ENCODE measurements at regions of chr1 and their contacts with region 1.

Region 1: DNA sequence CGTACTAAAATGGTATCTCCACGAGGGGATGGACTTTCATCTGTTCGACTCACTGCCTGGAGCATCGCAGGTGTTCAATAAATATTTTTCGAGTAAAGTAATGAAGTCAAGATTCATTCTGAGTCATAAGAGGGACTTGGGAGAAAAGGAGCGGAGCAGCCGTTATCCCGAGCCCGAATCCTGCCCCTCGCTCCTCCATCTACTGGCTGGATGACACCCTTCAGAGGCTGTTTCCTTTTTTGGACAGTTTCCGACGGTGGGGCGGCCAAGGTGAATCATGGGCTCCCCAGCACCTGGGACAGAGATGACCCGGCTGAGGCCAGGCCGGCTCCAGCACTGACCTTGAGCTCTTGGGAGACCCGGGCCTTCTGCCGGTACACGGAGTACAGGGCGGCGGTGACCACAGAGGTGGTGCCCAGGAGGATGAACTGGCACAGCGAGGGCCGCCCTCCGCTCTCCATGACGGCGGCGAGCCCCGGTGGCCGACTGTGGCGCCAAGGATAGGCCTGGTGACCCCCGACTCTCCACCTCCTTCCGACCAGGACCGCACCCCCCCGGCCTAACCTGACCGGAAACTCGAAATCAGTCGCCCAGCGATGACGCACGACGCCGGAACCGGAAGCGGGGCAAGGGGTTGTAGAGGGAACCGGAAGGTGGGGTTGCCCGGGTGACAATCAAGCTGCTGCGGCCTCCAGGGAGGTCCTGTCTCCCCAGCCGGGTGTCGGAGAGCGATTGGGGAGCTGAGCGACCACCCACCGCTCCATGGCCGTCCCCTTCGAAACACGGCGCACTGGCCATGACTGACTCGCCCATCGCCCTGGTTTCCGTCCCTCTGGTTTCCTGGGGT is at the start of gene MUL1:
- DNase-seq: peak; percentile 87 to 95 (median 89)
- H3K4me3 ChIP-seq: peak within 1 kb of the TSS; percentile 76
- H3K4me3 Mint-ChIP-seq: peak within 1 kb of the TSS; percentile 81 to 96 (median 85)
- H3K27ac ChIP-seq: peak within 1 kb of the TSS; percentile 90
- H3K27ac Mint-ChIP-seq: peak within 1 kb of the TSS; percentile 72 to 99 (median 92)
- H3K4me1 ChIP-seq: peaks cover 13% of the 10 kb centered on the region
- H3K4me1 Mint-ChIP-seq: peaks cover 23 to 34% (median 33%) of the 10 kb centered on the region in 3 donors
- H3K27me3 ChIP-seq: no peaks in the 10 kb centered on the region
- H3K27me3 Mint-ChIP-seq: peaks cover 7% of the 10 kb centered on the region in 2 donors
- total RNA-seq, gene MUL1: 21.3 to 23.3 TPM

Region 2: DNA sequence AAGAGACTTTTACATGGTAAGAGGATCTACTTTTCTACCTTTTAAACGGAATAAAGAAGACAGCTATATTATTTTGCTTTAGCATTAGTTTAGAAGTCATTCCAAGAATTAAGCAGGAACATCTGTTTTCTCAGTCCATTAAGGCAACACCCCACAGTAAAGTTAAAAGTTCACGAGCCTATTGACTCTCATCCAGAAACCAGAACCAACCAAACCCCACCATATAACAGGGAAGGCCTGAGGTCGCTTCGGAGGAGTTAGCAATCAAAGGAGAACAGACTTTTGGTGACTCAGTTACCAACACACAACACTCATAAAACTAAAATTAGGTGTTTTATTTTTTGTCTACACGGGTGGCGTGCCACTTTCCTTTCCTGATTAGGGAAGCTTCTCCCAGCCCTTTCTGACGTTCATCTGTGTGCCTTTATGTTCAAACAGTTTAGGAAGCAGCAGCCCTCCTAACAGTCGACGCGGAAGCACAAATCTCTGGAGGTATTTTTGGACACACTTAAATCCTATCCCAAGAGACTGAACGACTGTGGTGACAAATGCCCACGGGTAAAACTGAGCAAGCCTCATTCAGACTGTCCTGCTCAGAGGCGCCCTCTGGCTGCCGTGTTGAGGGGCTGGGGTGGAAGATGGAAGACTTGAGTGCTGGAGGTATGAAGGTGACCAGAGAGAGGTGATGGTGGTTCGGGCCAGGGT is 312.9 kb before region 1 on chr1:
- CTCF ChIA-PET with region 1: no interaction called
- POLR2A ChIA-PET with region 1: no interaction called
- DNase-seq: peak; percentile 37 to 75 (median 56)
- H3K4me3 ChIP-seq: no peak overlapping the region
- H3K4me3 Mint-ChIP-seq: no peak overlapping the region
- H3K27ac ChIP-seq: no peak overlapping the region
- H3K27ac Mint-ChIP-seq: no peak overlapping the region
- H3K4me1 ChIP-seq: no peaks in the 10 kb centered on the region
- H3K4me1 Mint-ChIP-seq: peaks cover 0 to 4% (median 0%) of the 10 kb centered on the region in 3 donors
- H3K27me3 ChIP-seq: no peaks in the 10 kb centered on the region
- H3K27me3 Mint-ChIP-seq: peaks cover 17 to 56% of the 10 kb centered on the region in 2 donors

Region 3: GRCh38 chr1:20322081-20322824 is 185.5 kb before region 1 on chr1:
- CTCF ChIA-PET with region 1: no interaction called
- POLR2A ChIA-PET with region 1: no interaction called
- DNase-seq: no peak
- H3K4me3 ChIP-seq: peak overlapping the region; percentile 54
- H3K4me3 Mint-ChIP-seq: peak overlapping the region; percentile 73 to 89 (median 84)
- H3K27ac ChIP-seq: no peak overlapping the region
- H3K27ac Mint-ChIP-seq: peak overlapping the region; percentile 67 to 96 (median 86)
- H3K4me1 ChIP-seq: peaks cover 11% of the 10 kb centered on the region
- H3K4me1 Mint-ChIP-seq: peaks cover 22 to 30% (median 28%) of the 10 kb centered on the region in 3 donors
- H3K27me3 ChIP-seq: no peaks in the 10 kb centered on the region
- H3K27me3 Mint-ChIP-seq: peaks cover 12 to 20% of the 10 kb centered on the region in 2 donors

Region 4: DNA sequence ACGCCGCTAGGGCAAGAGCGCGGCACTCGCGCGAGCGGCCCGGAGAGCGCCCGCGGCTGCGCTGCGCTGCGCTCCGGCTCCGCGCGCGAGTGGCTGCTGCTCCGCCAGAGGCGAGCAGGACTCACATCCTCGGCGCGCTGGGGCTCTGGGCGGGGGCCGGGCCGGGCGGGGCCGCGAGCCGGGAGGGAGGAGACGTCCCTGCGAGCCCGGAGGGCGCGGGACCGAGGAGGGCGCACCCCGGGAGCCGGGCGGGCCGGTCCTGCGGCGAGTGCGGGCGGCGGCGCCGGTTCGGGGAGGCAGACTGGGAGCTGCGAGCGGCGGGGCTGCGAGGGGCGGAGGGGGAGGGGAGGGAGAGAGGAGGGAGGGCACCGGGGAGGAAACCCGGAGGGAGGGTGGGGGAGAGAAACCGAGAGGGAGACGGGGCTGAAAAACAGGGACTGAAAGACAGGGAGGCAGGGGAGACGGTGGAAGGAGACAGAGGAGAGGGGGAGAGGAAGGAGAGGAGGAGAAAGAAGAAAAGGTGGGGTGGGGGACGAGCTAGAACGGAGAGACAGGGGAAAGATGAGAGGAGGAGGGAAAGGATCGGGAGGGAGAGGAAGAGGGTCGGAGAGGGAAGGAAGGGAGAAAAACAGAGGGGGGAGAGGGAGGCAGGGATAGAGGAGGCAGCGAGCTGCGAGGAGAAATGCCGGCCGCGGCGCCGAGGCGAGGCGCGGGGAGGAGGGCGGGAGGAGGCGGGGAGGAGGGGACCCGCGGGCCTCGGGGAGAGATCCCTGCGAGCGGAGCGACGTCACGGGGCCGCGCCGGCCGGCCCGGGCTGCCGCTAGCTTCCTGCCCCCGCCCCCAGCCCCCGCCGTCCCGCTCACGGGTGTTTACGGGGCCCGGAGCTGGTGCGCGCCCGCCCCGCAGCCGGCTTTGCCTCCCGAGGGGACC is 22.0 kb before region 1 on chr1 and contains the start of gene CAMK2N1:
- CTCF ChIA-PET with region 1: interaction called, 4 read pairs
- POLR2A ChIA-PET with region 1: interaction called, 12 read pairs
- DNase-seq: peak; percentile 30 to 77 (median 49)
- H3K4me3 ChIP-seq: peak within 1 kb of the TSS; percentile 67
- H3K4me3 Mint-ChIP-seq: peak within 1 kb of the TSS; percentile 84 to 98 (median 90)
- H3K27ac ChIP-seq: peak within 1 kb of the TSS; percentile 51
- H3K27ac Mint-ChIP-seq: peak within 1 kb of the TSS in 7 of 8 donors; percentile 42 to 92 (median 72)
- H3K4me1 ChIP-seq: peaks cover 16% of the 10 kb centered on the region
- H3K4me1 Mint-ChIP-seq: peaks cover 10 to 23% (median 14%) of the 10 kb centered on the region in 3 donors
- H3K27me3 ChIP-seq: peaks cover 33% of the 10 kb centered on the region
- H3K27me3 Mint-ChIP-seq: peaks cover 20 to 39% of the 10 kb centered on the region in 2 donors
- total RNA-seq, gene CAMK2N1: 2.8 TPM

Region 5: DNA sequence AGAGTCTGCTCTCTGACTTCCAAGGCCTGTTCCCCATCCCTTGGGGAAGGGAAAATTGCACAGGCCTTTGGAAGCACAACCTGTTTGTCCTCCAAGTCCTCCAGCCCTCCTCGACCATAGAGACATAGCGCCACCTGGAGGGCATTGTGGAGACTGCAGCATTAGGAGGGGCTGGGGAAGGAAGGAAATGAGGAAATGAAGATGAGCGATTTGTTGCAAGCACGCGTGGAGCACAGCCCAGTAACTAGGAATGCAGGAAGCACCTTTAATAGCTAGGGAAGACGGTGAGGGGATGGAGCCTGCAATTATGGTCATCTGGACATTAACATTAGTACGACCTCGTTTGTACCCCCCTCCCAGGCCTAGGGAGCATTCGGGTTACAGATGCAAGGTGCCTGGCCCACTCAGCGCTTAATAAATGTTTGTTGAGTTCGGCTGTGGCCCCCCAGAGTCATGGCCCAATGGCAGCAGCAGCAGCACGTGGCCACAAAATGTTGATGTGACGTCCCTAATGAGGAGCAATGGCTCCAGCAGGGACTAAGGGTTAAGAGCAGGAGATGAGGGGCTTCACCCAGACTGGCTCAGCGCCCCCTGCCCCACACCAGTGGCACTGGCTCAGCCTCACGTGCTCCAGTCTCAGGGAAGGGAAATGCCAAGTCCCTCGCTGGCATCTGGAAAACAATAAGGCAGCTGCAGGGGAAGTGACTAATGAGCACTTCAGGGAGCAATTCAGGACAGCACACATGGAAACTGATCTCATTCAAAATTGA is 13.8 kb before region 1 on chr1:
- CTCF ChIA-PET with region 1: interaction called, 12 read pairs
- POLR2A ChIA-PET with region 1: no interaction called
- DNase-seq: peak; percentile 66 to 86 (median 74)
- H3K4me3 ChIP-seq: no peak overlapping the region
- H3K4me3 Mint-ChIP-seq: no peak overlapping the region
- H3K27ac ChIP-seq: no peak overlapping the region
- H3K27ac Mint-ChIP-seq: no peak overlapping the region
- H3K4me1 ChIP-seq: peaks cover 6% of the 10 kb centered on the region
- H3K4me1 Mint-ChIP-seq: peaks cover 0 to 2% (median 0%) of the 10 kb centered on the region in 3 donors
- H3K27me3 ChIP-seq: no peaks in the 10 kb centered on the region
- H3K27me3 Mint-ChIP-seq: peaks cover 0 to 2% of the 10 kb centered on the region in 2 donors

Measured in CD8-positive, alpha-beta memory T cell (primary cell).